Natural killer cell (primary cell): ENCODE measurements at regions of chr15 and their contacts with region 1.

Region 1: GRCh38 chr15:76235186-76235826 is 76.0 kb downstream of the ETFA start:
- DNase-seq: peak in 1 of 2 donors; percentile 51
- ATAC-seq: peak; percentile 65 to 77 (median 72)
- H3K4me3 ChIP-seq: no peak overlapping the region
- H3K4me3 Mint-ChIP-seq: no peak overlapping the region
- H3K27ac ChIP-seq: no peak overlapping the region
- H3K27ac Mint-ChIP-seq: no peak overlapping the region
- H3K4me1 ChIP-seq: no peaks in the 10 kb centered on the region
- H3K4me1 Mint-ChIP-seq: no peaks in the 10 kb centered on the region
- H3K27me3 ChIP-seq: no peaks in the 10 kb centered on the region
- H3K27me3 Mint-ChIP-seq: no peaks in the 10 kb centered on the region
- CTCF ChIP-seq: peak; percentile 69

Region 2: GRCh38 chr15:76285239-76285825 is 50.0 kb after region 1 on chr15:
- intact Hi-C with region 1: loop called (anchors 10 kb)
- DNase-seq: peak in 1 of 2 donors; percentile 52
- ATAC-seq: no peak
- H3K4me3 ChIP-seq: no peak overlapping the region
- H3K4me3 Mint-ChIP-seq: no peak overlapping the region
- H3K27ac ChIP-seq: no peak overlapping the region
- H3K27ac Mint-ChIP-seq: peak overlapping the region; percentile 86 to 89
- H3K4me1 ChIP-seq: peaks cover 16% of the 10 kb centered on the region
- H3K4me1 Mint-ChIP-seq: peaks cover 28 to 39% of the 10 kb centered on the region in 2 donors
- H3K27me3 ChIP-seq: no peaks in the 10 kb centered on the region
- H3K27me3 Mint-ChIP-seq: no peaks in the 10 kb centered on the region
- CTCF ChIP-seq: peak; percentile 49

Region 3: GRCh38 chr15:76333720-76334437 is 98.6 kb after region 1 on chr15:
- intact Hi-C with region 1: loop called (anchors 2 kb)
- DNase-seq: peak in 1 of 2 donors; percentile 18
- ATAC-seq: no peak
- H3K4me3 ChIP-seq: no peak overlapping the region
- H3K4me3 Mint-ChIP-seq: peak overlapping the region; percentile 7
- H3K27ac ChIP-seq: no peak overlapping the region
- H3K27ac Mint-ChIP-seq: no peak overlapping the region
- H3K4me1 ChIP-seq: peaks cover 42% of the 10 kb centered on the region
- H3K4me1 Mint-ChIP-seq: peaks cover 32 to 40% of the 10 kb centered on the region in 2 donors
- H3K27me3 ChIP-seq: peaks cover 44% of the 10 kb centered on the region
- H3K27me3 Mint-ChIP-seq: peaks cover 71 to 73% of the 10 kb centered on the region in 2 donors
- CTCF ChIP-seq: no peak

Region 4: DNA sequence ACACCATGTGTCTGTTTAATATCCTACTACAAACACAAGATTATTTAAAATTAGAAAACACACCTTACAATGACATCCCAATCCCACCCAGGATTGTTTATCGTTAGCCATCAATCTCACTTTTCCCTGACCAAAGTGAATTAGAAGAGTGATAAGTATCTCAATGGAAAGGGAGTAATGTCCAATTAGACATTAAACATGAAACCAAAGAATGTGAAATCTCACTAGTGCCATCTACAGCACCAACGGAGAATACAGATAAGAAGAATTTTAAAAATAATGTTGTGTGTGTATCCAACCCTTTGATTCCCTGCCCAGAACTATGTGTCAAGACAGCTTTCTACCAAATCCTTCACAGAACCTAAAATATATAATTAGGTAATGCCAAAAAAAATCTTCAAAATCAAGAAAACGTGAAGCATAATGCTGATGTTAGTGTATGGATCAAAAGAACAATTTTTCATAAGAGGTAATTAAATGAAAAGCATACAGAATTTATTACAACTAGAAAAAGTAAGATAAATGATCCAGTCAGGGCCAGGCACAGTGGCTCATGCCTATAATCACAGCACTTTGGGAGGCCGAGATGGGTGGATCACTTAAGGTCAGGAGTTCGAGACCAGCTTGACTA is 605.6 kb after region 1 on chr15:
- intact Hi-C with region 1: loop called (anchors 2 kb)
- DNase-seq: peak in 1 of 2 donors; percentile 22
- ATAC-seq: no peak
- H3K4me3 ChIP-seq: no peak overlapping the region
- H3K4me3 Mint-ChIP-seq: no peak overlapping the region
- H3K27ac ChIP-seq: no peak overlapping the region
- H3K27ac Mint-ChIP-seq: no peak overlapping the region
- H3K4me1 ChIP-seq: no peaks in the 10 kb centered on the region
- H3K4me1 Mint-ChIP-seq: peaks cover 32 to 34% of the 10 kb centered on the region in 2 donors
- H3K27me3 ChIP-seq: no peaks in the 10 kb centered on the region
- H3K27me3 Mint-ChIP-seq: no peaks in the 10 kb centered on the region
- CTCF ChIP-seq: peak; percentile 32

Region 5: GRCh38 chr15:76866716-76867321 is 631.5 kb after region 1 on chr15:
- intact Hi-C with region 1: loop called (anchors 10 kb)
- DNase-seq: peak in 1 of 2 donors; percentile 21
- ATAC-seq: no peak
- H3K4me3 ChIP-seq: no peak overlapping the region
- H3K4me3 Mint-ChIP-seq: no peak overlapping the region
- H3K27ac ChIP-seq: no peak overlapping the region
- H3K27ac Mint-ChIP-seq: no peak overlapping the region
- H3K4me1 ChIP-seq: no peaks in the 10 kb centered on the region
- H3K4me1 Mint-ChIP-seq: peaks cover 36 to 60% of the 10 kb centered on the region in 2 donors
- H3K27me3 ChIP-seq: no peaks in the 10 kb centered on the region
- H3K27me3 Mint-ChIP-seq: no peaks in the 10 kb centered on the region
- CTCF ChIP-seq: no peak

Region 6: GRCh38 chr15:77496710-77497103 is 1261.4 kb after region 1 on chr15:
- intact Hi-C with region 1: no loop called
- DNase-seq: peak; percentile 72 to 81
- ATAC-seq: peak; percentile 80 to 94 (median 92)
- H3K4me3 ChIP-seq: no peak overlapping the region
- H3K4me3 Mint-ChIP-seq: no peak overlapping the region
- H3K27ac ChIP-seq: no peak overlapping the region
- H3K27ac Mint-ChIP-seq: no peak overlapping the region
- H3K4me1 ChIP-seq: peaks cover 17% of the 10 kb centered on the region
- H3K4me1 Mint-ChIP-seq: peaks cover 10 to 17% of the 10 kb centered on the region in 2 donors
- H3K27me3 ChIP-seq: no peaks in the 10 kb centered on the region
- H3K27me3 Mint-ChIP-seq: no peaks in the 10 kb centered on the region
- CTCF ChIP-seq: peak; percentile 96